ENCODE measurements at regions of chr11 and their contacts with region 1.

Region 1: GRCh38 chr11:57116654-57117053 is 65.1 kb upstream of the LRRC55 start:
- DNase-seq: no peak
- H3K4me3 ChIP-seq: no peak overlapping the region
- H3K4me3 Mint-ChIP-seq: no peak overlapping the region
- H3K27ac ChIP-seq: no peak overlapping the region
- H3K27ac Mint-ChIP-seq: no peak overlapping the region
- H3K4me1 ChIP-seq: no peaks in the 10 kb centered on the region
- H3K4me1 Mint-ChIP-seq: no peaks in the 10 kb centered on the region
- H3K27me3 ChIP-seq: no peaks in the 10 kb centered on the region
- H3K27me3 Mint-ChIP-seq: peaks cover 0 to 1% of the 10 kb centered on the region in 2 donors

Region 2: GRCh38 chr11:57100638-57101331 is 15.9 kb before region 1 on chr11:
- CTCF ChIA-PET with region 1: no interaction called
- POLR2A ChIA-PET with region 1: no interaction called
- intact Hi-C with region 1: no loop called
- DNase-seq: no peak
- H3K4me3 ChIP-seq: no peak overlapping the region
- H3K4me3 Mint-ChIP-seq: no peak overlapping the region
- H3K27ac ChIP-seq: no peak overlapping the region
- H3K27ac Mint-ChIP-seq: no peak overlapping the region
- H3K4me1 ChIP-seq: no peaks in the 10 kb centered on the region
- H3K4me1 Mint-ChIP-seq: no peaks in the 10 kb centered on the region
- H3K27me3 ChIP-seq: no peaks in the 10 kb centered on the region
- H3K27me3 Mint-ChIP-seq: peaks cover 0 to 1% of the 10 kb centered on the region in 2 donors

Region 3: DNA sequence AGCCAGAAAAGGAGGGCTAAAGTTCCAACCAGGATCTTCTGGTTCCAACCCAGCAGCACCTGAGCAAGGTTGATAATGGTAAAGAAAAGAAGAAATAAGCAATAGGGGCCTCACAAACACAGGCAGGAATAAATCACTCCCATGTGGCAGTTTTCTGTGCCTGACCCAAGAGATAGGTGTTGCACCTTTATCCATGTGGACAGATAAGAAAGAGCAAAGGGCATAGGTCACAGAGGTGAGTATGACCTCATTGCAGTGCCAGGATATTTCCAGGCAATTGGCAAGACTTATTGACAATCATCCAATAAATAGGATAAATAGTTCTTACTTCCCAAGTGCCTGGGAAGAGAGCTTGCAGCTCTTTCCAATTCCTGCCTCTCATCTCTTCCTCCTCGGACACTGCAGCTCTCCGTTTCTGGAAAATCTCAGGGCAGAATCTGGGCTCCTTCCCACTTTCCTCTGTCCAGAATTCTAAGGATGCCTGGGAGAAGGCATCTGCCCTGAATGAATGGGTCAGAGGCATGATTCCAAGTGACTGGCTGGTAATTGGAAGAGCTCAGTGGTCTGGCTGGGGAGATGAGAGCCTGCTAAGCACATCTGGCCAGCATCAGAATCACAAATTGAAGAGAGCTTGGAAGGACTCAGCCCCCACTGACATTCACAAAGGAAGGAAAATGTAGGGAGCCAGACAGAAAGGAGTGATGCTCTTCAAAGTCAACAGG is 50.6 kb after region 1 on chr11:
- CTCF ChIA-PET with region 1: no interaction called
- POLR2A ChIA-PET with region 1: no interaction called
- intact Hi-C with region 1: loop called (anchors 10 kb)
- DNase-seq: no peak
- H3K4me3 ChIP-seq: no peak overlapping the region
- H3K4me3 Mint-ChIP-seq: no peak overlapping the region
- H3K27ac ChIP-seq: no peak overlapping the region
- H3K27ac Mint-ChIP-seq: no peak overlapping the region
- H3K4me1 ChIP-seq: no peaks in the 10 kb centered on the region
- H3K4me1 Mint-ChIP-seq: no peaks in the 10 kb centered on the region
- H3K27me3 ChIP-seq: no peaks in the 10 kb centered on the region
- H3K27me3 Mint-ChIP-seq: peaks cover 2 to 8% of the 10 kb centered on the region in 2 donors

Measured in CD4-positive, alpha-beta memory T cell (primary cell).